Right ventricle myocardium inferior (tissue), 1 donor: ENCODE measurements at regions of chr7 and their contacts with region 1.

Region 1: DNA sequence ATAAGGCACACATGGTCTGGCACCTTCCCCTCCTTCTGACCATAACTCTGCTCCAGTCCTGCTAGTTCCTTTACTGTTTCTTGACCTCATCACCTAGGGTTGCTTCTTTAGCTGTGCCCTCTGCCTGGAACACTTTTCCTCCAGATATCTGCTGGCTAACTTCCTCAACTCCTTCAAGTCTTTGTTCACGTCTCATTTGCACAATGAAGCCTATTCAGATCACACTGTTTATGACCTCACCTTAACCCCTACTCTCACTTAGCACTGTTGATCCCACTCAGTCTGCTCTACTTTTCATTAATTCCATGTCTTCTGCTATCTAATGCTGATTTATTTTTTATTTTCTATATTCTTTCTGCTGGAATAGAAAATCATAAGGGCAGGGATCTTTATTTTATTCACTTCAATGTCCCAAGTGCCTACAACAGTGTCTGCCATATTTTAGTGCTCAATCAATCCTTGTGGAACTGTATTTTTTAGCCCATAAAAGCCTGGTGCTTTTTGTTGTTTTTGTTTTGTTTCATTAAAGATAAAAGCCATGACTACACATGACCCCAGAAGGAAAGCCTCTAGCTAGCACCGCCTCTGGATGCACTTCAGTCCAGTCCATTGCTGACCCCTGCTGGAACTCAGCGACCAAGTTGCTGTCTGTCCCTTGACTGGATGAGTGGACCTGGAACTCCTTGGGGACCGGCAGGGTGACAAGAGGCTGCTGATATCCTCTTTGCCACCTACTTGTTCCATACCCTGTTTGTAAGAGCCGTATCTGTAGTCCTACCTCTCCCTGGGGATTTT is 12.3 kb downstream of the KLF14 start:
- DNase-seq: peak; percentile 75
- ATAC-seq: peak; percentile 88

Region 2: GRCh38 chr7:130242198-130243014 is 479.3 kb before region 1 on chr7:
- intact Hi-C with region 1: loop called (anchors 2 kb)
- DNase-seq: peak; percentile 75
- ATAC-seq: peak; percentile 54

Region 3: DNA sequence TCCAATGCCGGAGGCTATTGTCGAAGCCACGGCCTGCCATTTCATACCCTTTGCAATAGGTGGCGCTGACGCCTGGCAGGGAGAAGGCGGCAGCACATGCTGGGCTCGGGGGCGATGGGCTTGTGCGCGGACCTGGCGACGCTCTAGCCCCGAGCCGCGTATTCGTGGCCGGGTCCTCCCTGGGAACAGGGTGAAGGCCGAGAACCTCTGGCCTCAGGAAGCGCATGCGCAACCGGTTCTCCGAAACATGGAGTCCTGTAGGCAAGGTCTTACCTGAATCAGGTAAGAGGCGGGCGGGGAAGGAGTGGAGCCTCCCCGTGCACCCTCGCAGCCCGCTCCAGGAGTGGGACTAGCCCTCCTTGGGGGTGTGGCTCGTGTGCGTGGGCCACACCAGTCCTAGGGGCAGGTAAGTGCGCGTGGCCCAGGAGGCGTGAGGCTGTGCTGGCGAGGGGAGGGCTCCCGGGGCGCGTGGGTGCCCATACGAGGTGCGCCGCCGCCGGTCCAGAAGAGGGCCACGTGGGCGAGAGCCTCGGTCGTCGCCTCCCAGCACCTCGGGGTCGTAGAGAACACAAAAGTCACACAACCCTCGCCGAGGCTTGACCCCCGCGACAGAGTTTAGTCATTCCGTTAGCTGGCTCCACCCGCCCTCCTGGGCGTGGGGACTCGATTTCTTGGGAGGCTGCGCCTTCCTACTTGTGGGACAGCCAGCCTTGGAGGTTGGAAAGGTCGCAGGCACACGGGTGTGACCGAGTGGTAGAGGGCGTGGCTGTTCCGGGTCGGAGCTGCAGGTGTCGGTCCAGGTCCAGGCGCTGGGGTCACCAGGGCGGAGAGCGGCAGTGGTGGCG is 235.3 kb before region 1 on chr7:
- intact Hi-C with region 1: loop called (anchors 5 kb)
- DNase-seq: peak; percentile 79
- ATAC-seq: peak; percentile 62